ENCODE measurements at regions of chr3 and their contacts with region 1.

Region 1: DNA sequence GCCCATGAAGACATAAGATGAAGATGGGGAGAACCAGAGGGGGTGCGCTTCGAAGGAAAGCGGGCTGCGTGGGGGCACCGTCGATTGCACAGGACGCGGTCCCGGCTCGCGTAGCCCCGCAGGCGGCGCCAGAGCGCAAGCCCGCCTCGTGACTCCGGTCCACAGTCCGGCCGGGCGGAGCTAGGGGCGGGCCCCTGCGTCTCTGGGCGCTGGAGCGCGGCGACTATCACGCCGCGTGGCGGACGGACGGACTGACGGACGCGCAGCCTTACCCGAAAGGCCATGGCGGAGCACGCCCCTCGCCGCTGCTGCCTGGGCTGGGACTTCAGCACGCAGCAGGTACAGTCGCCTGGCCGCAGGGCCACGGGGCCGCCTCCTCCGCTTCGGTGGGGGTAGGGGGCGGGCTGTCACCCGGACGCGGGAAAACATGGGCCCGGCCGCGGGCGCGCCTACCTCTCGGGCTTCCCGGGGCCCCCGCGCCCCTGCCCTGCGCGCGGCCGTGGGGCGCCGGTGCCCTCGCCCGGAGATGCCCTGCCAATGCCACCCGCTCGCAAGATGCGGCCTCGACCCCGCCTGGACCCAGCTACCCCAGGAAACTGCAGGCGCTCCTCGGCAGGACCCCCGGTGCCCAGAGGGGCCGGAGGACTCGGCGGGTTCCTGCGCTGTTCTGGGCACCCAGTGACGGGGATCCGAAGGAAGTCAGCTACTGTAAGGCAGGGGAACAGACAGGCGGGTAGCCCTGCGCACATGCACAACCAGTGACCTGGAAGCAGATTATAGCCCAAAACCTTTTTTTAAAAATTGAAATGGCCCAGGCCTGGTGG is at the start of gene XYLB:
- DNase-seq: peak; percentile 72 to 91 (median 80)
- H3K4me3 ChIP-seq: peak within 1 kb of the TSS; percentile 60 to 94 (median 82)
- H3K27ac ChIP-seq: peak within 1 kb of the TSS in 35 of 59 donors; percentile 1 to 84 (median 38)
- H3K27me3 ChIP-seq: no peaks in the 10 kb centered on the region
- CTCF ChIP-seq: peak; percentile 68 to 96 (median 88)
- total RNA-seq, gene XYLB: 5.9 to 20.9 (median 12.0) TPM

Region 2: DNA sequence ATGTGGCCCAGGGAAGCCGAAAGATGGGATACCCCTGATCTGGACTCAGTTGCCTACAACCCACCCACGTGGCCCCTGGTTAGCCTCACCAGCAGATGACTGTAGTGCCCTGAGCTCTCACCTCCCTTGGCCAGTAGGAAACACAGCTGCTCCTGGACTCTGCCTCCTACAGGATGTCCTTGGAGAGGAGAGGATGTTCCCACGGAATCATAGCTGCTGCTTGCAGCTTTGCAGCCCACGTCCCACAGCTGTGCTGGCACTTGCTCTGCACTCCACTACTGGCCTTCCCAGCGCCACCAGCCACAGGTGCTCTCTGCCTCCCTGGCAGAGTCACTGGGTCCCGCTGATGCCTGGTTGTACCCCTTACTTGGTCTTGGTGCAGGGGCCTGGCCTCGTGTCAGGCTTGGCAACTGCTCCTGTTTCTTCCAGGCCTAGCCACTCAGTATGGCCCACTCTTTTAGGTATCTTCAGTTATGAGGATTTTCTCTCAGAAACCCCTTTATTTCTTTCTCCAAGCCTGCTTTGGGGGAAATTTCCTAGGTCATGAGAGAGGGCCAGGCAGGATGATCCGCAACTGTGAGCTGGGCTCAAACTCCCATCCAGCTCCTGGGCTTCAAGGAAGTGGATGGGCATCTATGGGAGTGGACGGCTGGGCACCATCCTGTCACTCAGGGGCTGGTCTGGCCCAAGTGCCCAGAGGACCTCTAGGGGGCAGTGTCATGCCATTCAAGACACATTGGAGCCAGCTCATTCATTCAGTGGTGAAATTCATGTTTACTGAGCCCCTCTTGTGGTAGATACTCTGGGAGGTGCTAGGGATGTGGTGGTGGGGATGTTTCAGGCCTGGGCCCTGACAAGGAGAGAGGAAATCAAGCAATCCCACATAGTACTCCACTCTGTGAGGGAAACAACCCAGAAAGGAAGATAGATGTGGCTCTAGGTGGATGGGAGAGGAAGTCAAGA is 372.4 kb before region 1 on chr3:
- intact Hi-C with region 1: loop called in 1 of 2 experiments (anchors 10 kb)
- DNase-seq: peak in 8 of 10 donors; percentile 54 to 82 (median 68)
- H3K4me3 ChIP-seq: no peak overlapping the region
- H3K27ac ChIP-seq: peak overlapping the region in 51 of 59 donors; percentile 2 to 97 (median 60)
- H3K27me3 ChIP-seq: no peaks in the 10 kb centered on the region
- CTCF ChIP-seq: peak; percentile 51 to 91 (median 82)

Region 3: DNA sequence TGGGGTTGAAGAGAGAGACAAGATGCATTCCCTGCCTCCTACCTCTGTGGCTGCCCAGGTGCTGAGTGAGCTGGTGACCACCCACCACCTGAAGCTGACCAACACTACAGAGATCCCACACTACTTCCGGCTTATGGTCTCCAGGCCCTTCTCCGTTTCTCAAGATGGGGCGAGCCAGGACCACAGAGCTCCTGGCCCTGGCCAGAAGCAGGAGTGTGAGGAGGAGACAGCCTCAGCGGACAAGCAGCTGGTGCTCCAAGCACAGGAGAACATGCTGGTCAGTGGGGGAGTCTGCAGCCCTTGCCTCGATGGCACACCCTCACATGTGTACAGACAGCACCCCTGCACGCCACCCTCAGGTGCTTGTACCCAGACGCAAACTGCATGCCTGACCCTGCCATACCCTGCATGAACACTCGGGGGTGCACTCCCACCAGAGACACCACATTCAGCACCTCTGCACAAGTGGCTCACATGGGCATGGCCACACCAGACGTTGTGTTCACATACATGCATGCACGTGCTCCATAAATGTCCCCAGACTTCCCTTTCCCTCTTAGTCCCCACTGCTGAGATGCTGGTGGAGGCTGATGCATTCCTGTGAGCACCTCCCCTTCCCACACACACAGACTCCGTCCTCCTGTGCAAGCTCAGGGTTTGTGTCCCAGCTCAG is 228.9 kb before region 1 on chr3:
- intact Hi-C with region 1: loop called in 1 of 2 experiments (anchors 2 kb)
- DNase-seq: peak in 8 of 10 donors; percentile 19 to 70 (median 64)
- H3K4me3 ChIP-seq: no peak overlapping the region
- H3K27ac ChIP-seq: peak overlapping the region in 6 of 59 donors; percentile 22 to 43 (median 28)
- H3K27me3 ChIP-seq: no peaks in the 10 kb centered on the region
- CTCF ChIP-seq: peak in 53 of 56 donors; percentile 41 to 74 (median 65)

Region 4: GRCh38 chr3:38136777-38137614 is 209.8 kb before region 1 on chr3 and contains the start of gene ACAA1:
- intact Hi-C with region 1: loop called (anchors 5 to 10 kb)
- DNase-seq: peak; percentile 96 to 100 (median 100)
- H3K4me3 ChIP-seq: peak within 1 kb of the TSS; percentile 47 to 100 (median 93)
- H3K27ac ChIP-seq: peak within 1 kb of the TSS in 58 of 59 donors; percentile 10 to 96 (median 89)
- H3K27me3 ChIP-seq: no peaks in the 10 kb centered on the region
- CTCF ChIP-seq: peak in 42 of 56 donors; percentile 5 to 64 (median 24)
- total RNA-seq, gene ACAA1: 60.8 to 105 (median 80.7) TPM

Region 5: DNA sequence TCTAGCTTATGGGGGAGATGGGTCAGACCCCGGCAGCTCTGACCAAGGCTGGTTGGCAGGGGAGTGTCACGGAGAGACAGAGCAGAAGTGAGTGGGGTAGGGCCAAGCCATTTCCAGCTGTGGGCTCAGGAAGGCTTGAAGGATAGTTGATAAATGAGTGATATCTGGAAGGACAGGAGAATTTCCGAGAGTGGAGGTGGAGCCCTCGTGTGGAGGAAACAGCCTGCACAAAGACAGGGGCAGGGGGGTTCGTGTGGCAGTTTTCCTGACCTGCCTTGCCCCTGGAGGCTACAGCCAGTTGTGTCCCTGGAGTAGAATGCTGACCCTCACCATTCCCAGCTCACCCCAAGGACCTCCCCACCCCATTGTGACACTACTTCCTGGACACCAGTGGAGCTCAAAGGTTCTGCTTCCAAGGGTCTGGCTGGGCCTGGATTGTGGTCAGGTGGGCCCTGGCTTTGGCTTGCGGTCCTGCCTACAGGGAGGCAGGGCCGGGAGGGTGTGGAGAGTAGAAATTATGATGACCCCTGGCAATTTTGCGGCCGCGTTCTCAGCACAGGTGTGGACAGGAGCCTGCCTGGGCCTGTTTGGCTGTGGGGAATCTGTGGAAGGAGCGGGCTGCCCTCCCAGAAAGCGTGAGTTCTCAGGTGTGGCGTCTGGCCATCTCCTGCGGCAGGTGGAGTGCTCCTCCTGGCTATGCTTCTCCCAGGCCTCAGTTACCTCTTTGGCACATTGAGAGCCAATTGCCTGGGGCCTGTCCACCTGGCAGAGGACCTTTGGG is 64.7 kb before region 1 on chr3 and contains the start of gene SLC22A14:
- intact Hi-C with region 1: no loop called
- DNase-seq: no peak
- H3K4me3 ChIP-seq: no peak within 1 kb of the TSS
- H3K27ac ChIP-seq: no peak within 1 kb of the TSS
- H3K27me3 ChIP-seq: no peaks in the 10 kb centered on the region
- CTCF ChIP-seq: no peak
- total RNA-seq, gene SLC22A14: 1.3 to 7.4 (median 3.2) TPM

Region 6: GRCh38 chr3:38453075-38453912 is 106.5 kb after region 1 on chr3 and contains the start of gene ACVR2B:
- intact Hi-C with region 1: loop called (anchors 5 kb)
- DNase-seq: peak; percentile 82 to 92 (median 88)
- H3K4me3 ChIP-seq: peak within 1 kb of the TSS; percentile 69 to 96 (median 89)
- H3K27ac ChIP-seq: peak within 1 kb of the TSS; percentile 26 to 96 (median 83)
- H3K27me3 ChIP-seq: no peaks in the 10 kb centered on the region
- CTCF ChIP-seq: peak in 9 of 56 donors; percentile 12 to 47 (median 21)
- total RNA-seq, gene ACVR2B: 10.4 to 24.2 (median 15.9) TPM

Region 7: DNA sequence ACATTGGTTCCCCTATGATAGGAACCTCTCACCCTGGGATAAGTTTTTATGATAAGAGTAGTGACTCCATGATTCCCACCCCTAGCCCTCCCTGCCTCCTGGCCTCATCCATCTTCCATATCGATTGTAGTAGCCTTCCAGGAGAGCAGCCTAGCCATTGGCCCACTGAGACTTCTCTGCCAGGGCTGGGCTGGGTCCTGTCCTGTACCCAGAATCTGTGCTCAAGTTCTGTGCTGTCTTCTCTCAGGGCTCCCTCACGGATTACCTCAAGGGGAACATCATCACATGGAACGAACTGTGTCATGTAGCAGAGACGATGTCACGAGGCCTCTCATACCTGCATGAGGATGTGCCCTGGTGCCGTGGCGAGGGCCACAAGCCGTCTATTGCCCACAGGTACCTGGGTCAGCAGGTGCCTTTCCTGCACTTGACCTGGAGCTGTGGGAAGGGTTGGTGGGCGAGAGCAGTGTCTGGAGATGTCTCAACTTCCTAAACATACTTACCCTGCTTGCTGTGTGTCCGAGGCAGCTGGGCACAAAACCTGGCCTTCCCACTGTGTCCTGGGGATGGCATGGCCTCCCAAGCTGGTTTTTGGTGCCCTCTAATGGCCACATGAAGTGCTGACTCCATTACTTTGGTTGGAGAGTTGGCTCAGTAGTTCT is 132.8 kb after region 1 on chr3:
- intact Hi-C with region 1: loop called (anchors 2 to 5 kb)
- DNase-seq: peak in 8 of 10 donors; percentile 52 to 80 (median 72)
- H3K4me3 ChIP-seq: no peak overlapping the region
- H3K27ac ChIP-seq: no peak overlapping the region
- H3K27me3 ChIP-seq: no peaks in the 10 kb centered on the region
- CTCF ChIP-seq: peak; percentile 42 to 95 (median 84)

Measured in dorsolateral prefrontal cortex (tissue), 120 donors.